ENCODE measurements at regions of chr3 and their contacts with region 1.

Region 1: DNA sequence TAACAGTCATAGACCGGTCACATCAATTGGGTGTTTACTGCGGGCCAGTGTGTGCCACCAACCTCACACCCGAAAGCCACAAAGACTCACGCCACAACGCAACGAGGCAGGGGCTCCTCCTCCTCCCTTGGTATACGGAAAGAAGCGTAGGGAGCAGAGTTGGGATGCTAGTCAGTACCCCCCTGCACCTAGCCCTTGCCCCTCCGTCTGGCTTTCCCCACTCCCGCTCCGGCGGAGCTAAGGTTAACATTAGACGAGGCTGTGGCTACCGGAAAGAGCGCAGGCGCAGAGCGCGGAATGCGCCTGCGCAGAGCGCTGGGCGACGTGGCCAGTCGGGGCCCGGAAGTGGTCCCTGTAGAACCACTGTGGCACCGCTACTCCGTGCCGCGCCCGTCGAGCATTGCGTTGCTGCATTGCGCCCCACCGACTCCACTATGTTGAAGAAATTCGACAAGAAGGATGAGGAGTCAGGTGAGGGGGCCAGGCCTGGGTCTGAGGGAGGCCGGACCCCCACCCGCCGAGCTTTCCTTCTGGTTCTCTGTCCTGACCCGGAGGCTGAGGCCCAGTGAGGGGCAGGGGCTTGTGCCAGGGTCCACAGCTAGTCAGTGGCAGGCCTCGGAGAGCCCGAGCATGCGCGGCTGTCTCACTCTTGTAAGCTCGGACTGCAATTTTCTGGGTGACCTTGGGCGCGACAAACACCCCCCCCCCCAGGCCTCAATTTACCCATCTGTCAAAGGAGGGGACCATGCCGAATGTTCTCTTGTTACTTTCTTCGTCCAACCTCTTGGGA is at the start of gene COPG1:
- DNase-seq: peak; percentile 82 to 91 (median 88)
- H3K4me3 ChIP-seq: peak within 1 kb of the TSS; percentile 88 to 91
- H3K4me3 Mint-ChIP-seq: peak within 1 kb of the TSS; percentile 91 to 98 (median 96)
- H3K27ac ChIP-seq: peak within 1 kb of the TSS; percentile 92
- H3K27ac Mint-ChIP-seq: peak within 1 kb of the TSS; percentile 92 to 98 (median 97)
- H3K4me1 ChIP-seq: peaks cover 30% of the 10 kb centered on the region
- H3K4me1 Mint-ChIP-seq: peaks cover 21 to 64% (median 42%) of the 10 kb centered on the region in 4 donors
- H3K27me3 ChIP-seq: no peaks in the 10 kb centered on the region
- H3K27me3 Mint-ChIP-seq: no peaks in the 10 kb centered on the region
- total RNA-seq, gene COPG1: 147 TPM

Region 2: DNA sequence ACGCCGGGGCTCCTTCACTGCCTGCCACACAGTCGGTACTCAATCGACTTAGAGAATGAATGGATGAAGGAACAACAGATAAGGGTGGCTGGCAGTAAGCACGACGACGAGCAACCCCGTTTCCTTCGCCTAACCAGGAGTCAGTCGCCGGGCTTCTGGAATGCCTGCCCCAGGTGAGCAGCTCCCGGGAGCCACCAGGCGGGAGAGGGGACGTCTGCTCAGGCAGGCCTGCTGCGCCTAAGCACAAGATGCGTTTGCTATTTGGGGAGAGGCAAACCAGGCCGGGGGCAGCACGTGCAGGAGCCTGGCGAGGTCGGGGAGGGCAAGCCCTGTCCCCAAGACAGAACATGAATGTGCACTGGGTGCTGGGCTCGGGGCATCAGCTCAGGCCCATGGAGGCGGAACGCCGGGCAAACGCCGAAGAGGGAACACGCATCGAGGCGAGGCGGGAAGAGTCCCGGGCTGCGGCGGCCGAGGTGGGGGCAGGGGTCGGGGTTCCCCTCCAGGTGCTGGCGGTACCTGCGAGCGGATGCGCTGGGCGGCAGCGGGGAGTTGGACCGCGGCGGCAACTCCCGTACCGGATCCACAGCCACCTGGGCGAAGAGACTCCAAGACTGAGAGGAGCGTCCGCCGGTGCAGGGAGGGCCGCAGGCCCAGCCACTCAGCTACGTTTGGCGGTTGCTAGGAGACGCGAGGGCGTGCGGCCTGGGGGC is 255.9 kb before region 1 on chr3 and contains the start of gene CFAP92:
- CTCF ChIA-PET with region 1: interaction called, 11 read pairs
- POLR2A ChIA-PET with region 1: interaction called, 6 read pairs
- intact Hi-C with region 1: no loop called
- DNase-seq: peak; percentile 89 to 92 (median 91)
- H3K4me3 ChIP-seq: peak within 1 kb of the TSS in 1 of 2 donors; percentile 42
- H3K4me3 Mint-ChIP-seq: peak within 1 kb of the TSS; percentile 68 to 85 (median 78)
- H3K27ac ChIP-seq: peak within 1 kb of the TSS; percentile 40
- H3K27ac Mint-ChIP-seq: peak within 1 kb of the TSS; percentile 30 to 91 (median 83)
- H3K4me1 ChIP-seq: peaks cover 14% of the 10 kb centered on the region
- H3K4me1 Mint-ChIP-seq: peaks cover 5 to 28% (median 16%) of the 10 kb centered on the region in 4 donors
- H3K27me3 ChIP-seq: no peaks in the 10 kb centered on the region
- H3K27me3 Mint-ChIP-seq: no peaks in the 10 kb centered on the region
- total RNA-seq, gene CFAP92: 0.38 TPM in 1 of 2 experiments, not detected in the other

Region 3: DNA sequence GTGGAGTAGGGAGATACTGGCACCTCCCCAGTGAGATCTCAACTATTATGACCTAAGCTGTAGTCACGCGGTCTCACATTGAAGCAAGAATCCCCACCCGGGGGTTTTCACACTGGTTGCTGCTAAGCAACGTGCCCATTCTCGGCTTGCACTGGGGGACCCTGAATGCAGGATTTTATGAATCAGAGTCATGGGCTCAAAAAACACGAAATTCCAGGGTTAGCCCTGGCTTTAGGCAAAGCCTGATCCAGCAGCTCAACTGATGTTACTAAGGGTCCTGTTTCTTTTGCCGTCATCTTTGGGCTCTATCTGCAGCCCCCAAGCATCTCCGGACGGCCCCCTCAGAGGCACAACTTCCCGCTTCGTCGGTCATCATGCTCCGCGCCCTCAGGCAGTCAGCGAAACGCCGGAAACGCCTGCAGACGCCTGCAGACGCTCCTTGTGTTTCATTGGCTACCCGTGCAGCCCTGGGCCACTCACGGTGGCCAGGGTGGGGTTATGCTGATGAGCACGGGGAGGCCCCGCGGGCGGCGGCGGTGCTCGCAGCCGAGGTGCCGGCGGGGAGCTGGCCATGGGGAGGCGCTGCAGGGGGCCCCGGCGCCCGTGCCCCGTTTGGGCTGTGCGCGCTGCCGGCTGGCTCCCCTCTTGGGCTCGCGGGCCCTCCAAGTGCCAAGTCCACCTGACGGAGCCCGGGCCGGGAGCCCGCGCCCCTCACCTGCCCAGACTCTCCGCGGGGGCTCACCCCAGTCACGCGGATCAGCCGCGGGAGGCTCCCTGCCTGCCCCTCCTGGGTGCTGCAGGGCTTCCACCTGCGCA is 222.5 kb before region 1 on chr3:
- CTCF ChIA-PET with region 1: interaction called, 24 read pairs
- POLR2A ChIA-PET with region 1: interaction called, 15 read pairs
- intact Hi-C with region 1: loop called (anchors 1 kb)
- DNase-seq: peak; percentile 91 to 95 (median 94)
- H3K4me3 ChIP-seq: peak overlapping the region; percentile 42 to 57
- H3K4me3 Mint-ChIP-seq: peak overlapping the region; percentile 76 to 88 (median 85)
- H3K27ac ChIP-seq: peak overlapping the region; percentile 55
- H3K27ac Mint-ChIP-seq: peak overlapping the region; percentile 91 to 97 (median 97)
- H3K4me1 ChIP-seq: peaks cover 16% of the 10 kb centered on the region
- H3K4me1 Mint-ChIP-seq: peaks cover 10 to 25% (median 16%) of the 10 kb centered on the region in 4 donors
- H3K27me3 ChIP-seq: no peaks in the 10 kb centered on the region
- H3K27me3 Mint-ChIP-seq: no peaks in the 10 kb centered on the region

Region 4: DNA sequence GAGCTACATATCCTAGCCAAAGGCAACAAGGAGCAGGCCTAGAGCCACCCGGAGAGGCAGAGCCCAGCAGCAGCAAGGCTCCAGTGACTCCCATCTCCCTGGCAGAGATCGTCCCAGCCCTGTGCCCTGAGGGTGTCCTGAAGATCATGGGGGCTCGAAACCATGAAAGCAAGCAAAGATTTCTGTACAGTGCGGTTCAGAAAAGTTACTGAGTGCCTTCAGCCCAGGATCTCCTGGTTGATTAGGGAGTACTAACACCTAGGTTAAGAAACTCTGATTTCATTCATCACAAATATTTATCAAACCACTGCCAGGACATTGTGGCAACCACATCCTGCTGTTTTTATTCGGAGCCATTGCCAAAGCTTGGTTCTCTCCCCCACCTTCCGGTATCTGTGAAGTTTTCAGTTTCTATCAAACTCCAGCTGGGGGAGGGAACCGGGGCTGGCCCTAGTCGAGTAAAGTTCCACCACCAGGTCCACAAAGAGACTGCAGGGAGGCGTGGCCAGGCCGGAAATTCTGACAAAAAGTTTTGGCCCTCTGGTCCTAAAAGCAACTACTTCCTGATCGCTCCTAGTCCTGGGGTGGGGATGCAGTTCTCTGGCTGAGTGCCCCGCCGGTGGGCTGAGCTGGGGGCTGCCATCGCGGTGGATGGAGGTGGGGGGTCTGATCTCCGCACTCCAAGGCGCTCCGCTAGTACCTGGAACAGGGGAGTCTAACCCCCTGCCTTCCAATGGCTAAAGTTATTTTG is 129.0 kb before region 1 on chr3:
- CTCF ChIA-PET with region 1: interaction called, 4 read pairs
- POLR2A ChIA-PET with region 1: interaction called, 28 read pairs
- intact Hi-C with region 1: loop called (anchors 1 kb)
- DNase-seq: peak; percentile 92 to 97 (median 95)
- H3K4me3 ChIP-seq: peak overlapping the region; percentile 73 to 79
- H3K4me3 Mint-ChIP-seq: peak overlapping the region; percentile 92 to 99 (median 94)
- H3K27ac ChIP-seq: peak overlapping the region; percentile 62
- H3K27ac Mint-ChIP-seq: peak overlapping the region; percentile 94 to 99 (median 98)
- H3K4me1 ChIP-seq: peaks cover 54% of the 10 kb centered on the region
- H3K4me1 Mint-ChIP-seq: peaks cover 34 to 70% (median 52%) of the 10 kb centered on the region in 4 donors
- H3K27me3 ChIP-seq: no peaks in the 10 kb centered on the region
- H3K27me3 Mint-ChIP-seq: no peaks in the 10 kb centered on the region

Region 5: DNA sequence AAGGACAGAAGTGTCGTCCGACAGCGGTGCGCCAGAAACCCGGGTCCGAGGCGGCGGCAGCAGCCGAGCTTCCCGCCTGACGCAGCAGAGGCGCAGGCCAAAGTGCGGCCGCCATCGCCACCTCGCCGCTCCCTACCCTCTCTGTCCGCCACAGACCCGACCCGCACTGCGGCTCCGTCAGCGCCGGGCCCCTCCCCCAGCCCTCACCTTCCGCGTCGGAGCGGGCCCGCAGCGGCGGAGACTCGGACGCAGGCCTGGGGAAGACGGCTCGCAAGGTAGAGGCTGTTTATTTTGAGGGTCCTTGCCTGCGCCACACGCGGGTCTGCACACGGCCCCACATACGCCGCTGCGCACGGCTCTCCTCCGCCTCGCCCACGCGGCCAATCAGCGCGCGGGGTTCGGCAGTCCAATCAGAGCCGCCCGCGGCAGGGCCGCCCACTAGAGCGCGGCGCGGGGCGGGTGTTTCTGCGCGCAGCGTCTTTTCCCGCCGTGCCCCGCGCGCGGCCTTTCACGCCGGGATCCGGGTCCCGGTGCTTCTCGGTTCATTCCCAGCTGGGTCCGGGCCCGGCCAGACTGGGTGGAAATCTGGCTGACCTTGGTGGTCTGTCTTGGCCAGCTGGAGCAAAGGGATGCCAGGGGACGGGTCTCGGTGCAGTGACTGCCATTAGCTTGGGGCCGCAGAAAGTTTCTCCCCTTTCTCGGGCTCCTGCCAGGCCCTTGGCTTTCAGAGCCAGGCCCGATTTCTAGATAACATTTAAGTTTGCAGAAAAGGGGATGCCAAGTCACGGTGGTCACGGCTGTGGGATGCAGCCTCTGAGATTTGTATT is 65.7 kb before region 1 on chr3 and contains the start of gene CNBP:
- CTCF ChIA-PET with region 1: interaction called, 7 read pairs
- POLR2A ChIA-PET with region 1: interaction called, 18 read pairs
- intact Hi-C with region 1: loop called (anchors 1 kb)
- DNase-seq: peak; percentile 90 to 95 (median 93)
- H3K4me3 ChIP-seq: peak within 1 kb of the TSS; percentile 51 to 93
- H3K4me3 Mint-ChIP-seq: peak within 1 kb of the TSS; percentile 89 to 99 (median 97)
- H3K27ac ChIP-seq: peak within 1 kb of the TSS; percentile 99
- H3K27ac Mint-ChIP-seq: peak within 1 kb of the TSS; percentile 91 to 99 (median 98)
- H3K4me1 ChIP-seq: peaks cover 41% of the 10 kb centered on the region
- H3K4me1 Mint-ChIP-seq: peaks cover 20 to 55% (median 31%) of the 10 kb centered on the region in 4 donors
- H3K27me3 ChIP-seq: no peaks in the 10 kb centered on the region
- H3K27me3 Mint-ChIP-seq: no peaks in the 10 kb centered on the region
- total RNA-seq, gene CNBP: 369 to 400 TPM

Region 6: GRCh38 chr3:129278439-129278970 is 29.0 kb after region 1 on chr3 and contains the start of gene HMCES:
- CTCF ChIA-PET with region 1: interaction called, 3 read pairs
- POLR2A ChIA-PET with region 1: interaction called, 23 read pairs
- intact Hi-C with region 1: loop called (anchors 1 kb)
- DNase-seq: peak; percentile 93 to 97 (median 95)
- H3K4me3 ChIP-seq: peak within 1 kb of the TSS; percentile 69 to 85
- H3K4me3 Mint-ChIP-seq: peak within 1 kb of the TSS; percentile 94 to 99 (median 98)
- H3K27ac ChIP-seq: peak within 1 kb of the TSS; percentile 99
- H3K27ac Mint-ChIP-seq: peak within 1 kb of the TSS; percentile 90 to 100 (median 99)
- H3K4me1 ChIP-seq: peaks cover 44% of the 10 kb centered on the region
- H3K4me1 Mint-ChIP-seq: peaks cover 22 to 50% (median 38%) of the 10 kb centered on the region in 4 donors
- H3K27me3 ChIP-seq: no peaks in the 10 kb centered on the region
- H3K27me3 Mint-ChIP-seq: no peaks in the 10 kb centered on the region
- total RNA-seq, gene HMCES: 50.1 to 52.5 TPM

Region 7: GRCh38 chr3:129503471-129504291 is 254.2 kb after region 1 on chr3:
- CTCF ChIA-PET with region 1: no interaction called
- POLR2A ChIA-PET with region 1: no interaction called
- intact Hi-C with region 1: no loop called
- DNase-seq: no peak
- H3K4me3 ChIP-seq: no peak overlapping the region
- H3K4me3 Mint-ChIP-seq: no peak overlapping the region
- H3K27ac ChIP-seq: no peak overlapping the region
- H3K27ac Mint-ChIP-seq: peak overlapping the region in 1 of 7 donors; percentile 50
- H3K4me1 ChIP-seq: no peaks in the 10 kb centered on the region
- H3K4me1 Mint-ChIP-seq: no peaks in the 10 kb centered on the region
- H3K27me3 ChIP-seq: no peaks in the 10 kb centered on the region
- H3K27me3 Mint-ChIP-seq: no peaks in the 10 kb centered on the region